Dendritic cell treated with granulocyte-macrophage colony-stimulating factor and Interleukin-4, amounts not matched to agents 40 ng/mL and 50 ng/mL, for 4 days (primary cell): ENCODE measurements at regions of chr9 and their contacts with region 1.

Region 1: GRCh38 chr9:111597817-111598729 is 1.4 kb downstream of the PTGR1 start:
- H3K4me3 Mint-ChIP-seq: peak overlapping the region; percentile 95
- H3K27ac Mint-ChIP-seq: peak overlapping the region; percentile 92
- H3K4me1 Mint-ChIP-seq: peaks cover 24% of the 10 kb centered on the region
- H3K27me3 Mint-ChIP-seq: peaks cover 29% of the 10 kb centered on the region

Region 2: DNA sequence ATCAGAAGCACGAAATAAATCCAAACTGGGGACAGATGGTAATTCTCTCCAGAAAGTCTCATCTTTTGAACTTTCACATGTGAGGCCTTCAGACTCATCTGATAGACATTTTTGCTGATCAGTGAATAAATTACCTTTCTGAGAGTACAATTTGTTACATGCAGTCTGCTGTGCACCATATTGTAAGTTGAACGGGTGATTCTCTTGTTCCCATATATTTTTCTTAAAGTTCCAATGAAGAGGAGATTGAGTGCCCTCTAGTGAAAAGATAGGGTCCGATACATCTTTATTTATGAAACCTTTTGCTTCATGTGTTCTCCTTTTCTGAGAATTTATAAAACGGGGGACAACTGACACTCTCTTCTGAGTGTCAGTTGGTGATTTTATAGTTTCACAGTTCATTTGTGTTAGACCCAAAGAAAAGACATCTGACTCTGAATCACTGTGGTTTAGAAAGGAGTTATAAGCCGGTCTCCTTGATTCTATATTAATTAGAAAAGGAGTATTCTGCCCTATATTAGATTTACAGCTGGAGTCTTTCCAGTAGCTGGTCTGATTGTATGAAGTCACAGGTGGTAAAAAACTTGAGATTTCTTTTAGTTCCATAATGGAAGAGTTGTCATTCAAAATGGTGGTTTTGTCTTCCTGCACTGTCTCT is 93.7 kb after region 1 on chr9:
- intact Hi-C with region 1: loop called (anchors 5 kb)
- H3K4me3 Mint-ChIP-seq: no peak overlapping the region
- H3K27ac Mint-ChIP-seq: no peak overlapping the region
- H3K4me1 Mint-ChIP-seq: no peaks in the 10 kb centered on the region
- H3K27me3 Mint-ChIP-seq: no peaks in the 10 kb centered on the region

Region 3: DNA sequence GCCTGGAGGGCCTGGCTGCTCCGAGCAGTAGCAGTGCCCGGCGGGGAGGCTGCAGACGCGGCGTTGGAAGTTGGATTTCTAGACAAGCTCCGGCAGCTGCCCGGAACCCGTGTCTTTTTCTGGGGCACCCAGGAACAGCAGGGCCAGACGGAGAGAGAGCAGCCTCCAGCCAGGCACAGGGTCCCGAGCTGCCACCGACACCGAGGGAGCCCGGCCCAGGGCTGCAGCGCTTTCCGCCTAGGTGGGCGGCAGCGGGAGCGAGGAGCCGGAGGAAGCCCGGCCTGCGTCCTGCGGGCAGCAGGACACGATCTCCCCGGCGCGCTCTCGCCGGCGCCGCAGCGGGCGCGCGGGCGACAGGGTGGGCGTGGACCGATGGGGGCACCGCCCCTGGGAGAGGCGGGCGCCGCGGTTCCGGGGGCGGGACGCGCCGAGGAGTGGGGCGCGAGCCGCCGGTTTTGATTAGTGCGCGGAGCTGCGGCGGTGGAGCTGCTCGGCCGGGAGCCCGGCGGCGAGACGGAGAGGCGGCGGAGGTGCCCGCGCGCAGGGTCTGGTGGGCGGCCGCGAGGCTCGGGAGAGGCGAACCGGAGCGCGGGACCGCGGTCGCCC is 298.4 kb after region 1 on chr9 and contains the start of gene UGCG:
- intact Hi-C with region 1: no loop called
- H3K4me3 Mint-ChIP-seq: peak within 1 kb of the TSS; percentile 89
- H3K27ac Mint-ChIP-seq: no peak within 1 kb of the TSS
- H3K4me1 Mint-ChIP-seq: peaks cover 4% of the 10 kb centered on the region
- H3K27me3 Mint-ChIP-seq: peaks cover 8% of the 10 kb centered on the region